Endothelial cell of umbilical vein (primary cell): ENCODE measurements at regions of chr14 and their contacts with region 1.

Region 1: DNA sequence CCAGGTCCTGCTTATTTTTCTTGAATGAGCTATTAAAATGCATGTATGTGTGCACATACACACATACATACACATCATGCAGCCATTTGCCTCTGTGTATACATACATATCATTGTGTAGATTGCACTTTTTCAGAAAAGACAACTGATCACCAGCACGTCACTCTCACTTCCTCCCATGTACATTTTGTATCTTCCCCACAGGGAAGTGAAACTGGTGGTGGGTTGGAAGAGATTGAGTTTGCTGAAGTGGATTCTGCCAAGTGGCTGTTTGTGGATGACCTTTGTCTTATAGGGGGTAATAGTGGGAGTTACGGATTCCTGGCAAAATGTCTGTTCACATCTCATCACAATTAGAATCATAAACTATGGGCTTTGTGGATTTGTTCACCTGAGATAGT is 448.6 kb downstream of the RAD51B start:
- DNase-seq: no peak
- H3K4me3 ChIP-seq: no peak overlapping the region
- H3K27ac ChIP-seq: no peak overlapping the region
- H3K4me1 ChIP-seq: peaks cover 13% of the 10 kb centered on the region
- H3K27me3 ChIP-seq: no peaks in the 10 kb centered on the region
- CTCF ChIP-seq: no peak
- POLR2A ChIP-seq: no peak

Region 2: GRCh38 chr14:68359837-68360552 is 91.8 kb after region 1 on chr14:
- CTCF ChIA-PET with region 1: no interaction called
- POLR2A ChIA-PET with region 1: no interaction called
- dilution Hi-C with region 1: no loop called
- intact Hi-C with region 1: loop called (anchors 5 kb)
- DNase-seq: no peak
- H3K4me3 ChIP-seq: no peak overlapping the region
- H3K27ac ChIP-seq: no peak overlapping the region
- H3K4me1 ChIP-seq: peaks cover 21% of the 10 kb centered on the region
- H3K27me3 ChIP-seq: no peaks in the 10 kb centered on the region
- CTCF ChIP-seq: no peak
- POLR2A ChIP-seq: no peak